GM10248 (cell line): ENCODE measurements at regions of chr16 and their contacts with region 1.

Region 1: GRCh38 chr16:71610936-71611871 is 14.8 kb upstream of the MARVELD3 start:
- DNase-seq: peak; percentile 85
- CTCF ChIP-seq: peak; percentile 94

Region 2: GRCh38 chr16:71499775-71500364 is 111.3 kb before region 1 on chr16:
- CTCF ChIA-PET with region 1: interaction called, 68 read pairs
- POLR2A ChIA-PET with region 1: no interaction called
- DNase-seq: peak; percentile 70
- CTCF ChIP-seq: peak; percentile 79

Region 3: DNA sequence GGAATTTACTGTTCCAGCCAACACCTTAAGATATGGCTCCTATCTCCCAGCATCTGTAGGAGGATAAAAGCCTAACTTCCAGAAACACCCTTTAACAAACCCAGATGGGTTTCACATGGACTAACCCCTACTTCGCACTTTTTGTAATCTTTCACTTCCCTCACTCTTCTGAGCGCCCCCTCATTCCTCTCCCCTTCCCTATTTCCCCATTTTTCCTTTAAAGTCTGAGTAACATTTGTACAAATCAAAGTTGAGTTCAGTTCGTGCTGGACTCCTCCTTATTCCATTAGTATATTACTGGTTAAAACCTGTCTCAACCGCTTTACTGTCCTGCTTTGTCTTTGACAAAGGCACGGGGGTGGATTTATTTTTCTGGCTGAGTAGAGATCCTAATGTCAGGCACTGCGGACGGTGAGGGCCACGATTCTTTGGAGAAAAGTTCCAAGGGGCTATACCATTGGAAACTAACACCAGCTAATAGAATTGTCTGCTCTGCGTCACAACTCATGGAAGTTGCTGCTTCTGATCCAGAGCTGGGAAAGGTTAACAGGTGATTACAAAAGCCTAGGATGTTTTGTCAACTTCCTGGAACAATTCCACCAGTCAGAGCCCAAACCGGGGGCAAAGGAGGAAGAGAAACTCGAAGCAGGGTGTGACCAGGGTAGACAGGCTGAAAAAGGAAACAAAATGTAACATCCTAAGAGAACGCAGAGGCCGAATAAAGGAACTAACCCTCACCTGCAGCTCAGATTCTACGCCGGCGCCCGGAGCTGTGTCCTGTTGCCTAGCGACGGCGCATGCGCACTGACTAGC is 46.8 kb before region 1 on chr16:
- CTCF ChIA-PET with region 1: interaction called, 111 read pairs
- POLR2A ChIA-PET with region 1: no interaction called
- DNase-seq: no peak
- CTCF ChIP-seq: no peak

Region 4: GRCh38 chr16:71622088-71622487 is 10.9 kb after region 1 on chr16:
- CTCF ChIA-PET with region 1: interaction called, 26 read pairs
- POLR2A ChIA-PET with region 1: no interaction called
- DNase-seq: no peak
- CTCF ChIP-seq: no peak

Region 5: DNA sequence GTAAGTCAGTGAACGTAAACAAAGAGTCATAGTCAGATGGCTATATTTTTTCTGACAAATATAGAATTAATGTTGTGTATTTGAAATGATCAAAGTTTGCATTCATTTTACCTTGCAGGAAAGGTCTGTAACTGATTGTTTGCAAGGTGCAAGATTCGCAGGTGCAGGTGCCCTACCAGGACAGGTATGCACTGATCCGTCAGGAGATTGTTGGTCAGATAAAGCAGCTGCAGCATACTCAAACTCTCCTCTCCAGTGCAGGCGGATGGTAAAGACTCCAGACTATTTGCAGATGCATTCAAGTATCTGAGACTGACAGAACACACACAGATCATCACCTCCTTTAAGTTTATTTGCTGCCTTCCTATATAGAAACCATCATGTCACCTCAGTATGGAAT is 52.6 kb after region 1 on chr16:
- CTCF ChIA-PET with region 1: interaction called, 10 read pairs
- POLR2A ChIA-PET with region 1: no interaction called
- DNase-seq: no peak
- CTCF ChIP-seq: no peak